Gastrocnemius medialis (tissue), 4 donors: ENCODE measurements at regions of chr1 and their contacts with region 1.

Region 1: GRCh38 chr1:184555665-184556641 is 169.1 kb downstream of the C1orf21 start:
- DNase-seq: peak; percentile 52 to 67
- ATAC-seq: peak; percentile 81 to 82
- H3K4me3 ChIP-seq: no peak overlapping the region
- H3K27ac ChIP-seq: peak overlapping the region; percentile 91 to 97 (median 95)
- H3K4me1 ChIP-seq: peaks cover 40 to 69% of the 10 kb centered on the region in 2 donors
- H3K27me3 ChIP-seq: no peaks in the 10 kb centered on the region
- CTCF ChIP-seq: no peak
- POLR2A ChIP-seq: peak in 1 of 2 donors; percentile 12

Region 2: GRCh38 chr1:184075055-184076029 is 480.6 kb before region 1 on chr1:
- in situ Hi-C with region 1: no loop called
- intact Hi-C with region 1: loop called (anchors 10 kb)
- DNase-seq: no peak
- ATAC-seq: peak; percentile 75 to 81
- H3K4me3 ChIP-seq: no peak overlapping the region
- H3K27ac ChIP-seq: peak overlapping the region; percentile 4 to 41 (median 34)
- H3K4me1 ChIP-seq: peaks cover 6% of the 10 kb centered on the region in 2 donors
- H3K27me3 ChIP-seq: no peaks in the 10 kb centered on the region
- CTCF ChIP-seq: peak; percentile 55 to 89 (median 78)
- POLR2A ChIP-seq: no peak

Region 3: GRCh38 chr1:184502161-184502560 is 53.8 kb before region 1 on chr1:
- in situ Hi-C with region 1: no loop called
- intact Hi-C with region 1: no loop called
- DNase-seq: no peak
- ATAC-seq: no peak
- H3K4me3 ChIP-seq: no peak overlapping the region
- H3K27ac ChIP-seq: peak overlapping the region; percentile 88 to 96 (median 90)
- H3K4me1 ChIP-seq: peaks cover 70 to 91% of the 10 kb centered on the region in 2 donors
- H3K27me3 ChIP-seq: no peaks in the 10 kb centered on the region
- CTCF ChIP-seq: no peak
- POLR2A ChIP-seq: no peak

Region 4: GRCh38 chr1:184535191-184535970 is 20.6 kb before region 1 on chr1:
- in situ Hi-C with region 1: no loop called
- intact Hi-C with region 1: loop called (anchors 2 kb)
- DNase-seq: no peak
- ATAC-seq: peak; percentile 59 to 74
- H3K4me3 ChIP-seq: no peak overlapping the region
- H3K27ac ChIP-seq: peak overlapping the region; percentile 72 to 96 (median 90)
- H3K4me1 ChIP-seq: peaks cover 55 to 58% of the 10 kb centered on the region in 2 donors
- H3K27me3 ChIP-seq: no peaks in the 10 kb centered on the region
- CTCF ChIP-seq: no peak
- POLR2A ChIP-seq: peak in 1 of 2 donors; percentile 30

Region 5: GRCh38 chr1:184545595-184545994 is 10.4 kb before region 1 on chr1:
- in situ Hi-C with region 1: no loop called
- intact Hi-C with region 1: loop called (anchors 1 kb)
- DNase-seq: no peak
- ATAC-seq: peak in 1 of 2 donors; percentile 38
- H3K4me3 ChIP-seq: no peak overlapping the region
- H3K27ac ChIP-seq: peak overlapping the region in 2 of 4 donors; percentile 31 to 48
- H3K4me1 ChIP-seq: peaks cover 15 to 20% of the 10 kb centered on the region in 2 donors
- H3K27me3 ChIP-seq: no peaks in the 10 kb centered on the region
- CTCF ChIP-seq: no peak
- POLR2A ChIP-seq: no peak

Region 6: GRCh38 chr1:184632415-184633175 is 76.6 kb after region 1 on chr1:
- in situ Hi-C with region 1: loop called in 1 of 4 experiments (anchors 10 kb)
- intact Hi-C with region 1: loop called (anchors 2 kb)
- DNase-seq: peak; percentile 94 to 96
- ATAC-seq: peak; percentile 80 to 83
- H3K4me3 ChIP-seq: no peak overlapping the region
- H3K27ac ChIP-seq: peak overlapping the region; percentile 68 to 97 (median 88)
- H3K4me1 ChIP-seq: peaks cover 48 to 65% of the 10 kb centered on the region in 2 donors
- H3K27me3 ChIP-seq: no peaks in the 10 kb centered on the region
- CTCF ChIP-seq: no peak
- POLR2A ChIP-seq: no peak